PC-3 (cell line): ENCODE measurements at regions of chr4 and their contacts with region 1.

Region 1: GRCh38 chr4:43943998-43944397 is 504.6 kb downstream of the KCTD8 start:
- DNase-seq: peak; percentile 21
- ATAC-seq: peak; percentile 60
- H3K4me3 ChIP-seq: no peak overlapping the region
- H3K27ac ChIP-seq: no peak overlapping the region; the same call in 1 of the 2 replicates
- H3K4me1 ChIP-seq: peaks cover 2% of the 10 kb centered on the region; the same call in 1 of the 2 replicates
- H3K27me3 ChIP-seq: no peaks in the 10 kb centered on the region
- CTCF ChIP-seq: no peak

Region 2: DNA sequence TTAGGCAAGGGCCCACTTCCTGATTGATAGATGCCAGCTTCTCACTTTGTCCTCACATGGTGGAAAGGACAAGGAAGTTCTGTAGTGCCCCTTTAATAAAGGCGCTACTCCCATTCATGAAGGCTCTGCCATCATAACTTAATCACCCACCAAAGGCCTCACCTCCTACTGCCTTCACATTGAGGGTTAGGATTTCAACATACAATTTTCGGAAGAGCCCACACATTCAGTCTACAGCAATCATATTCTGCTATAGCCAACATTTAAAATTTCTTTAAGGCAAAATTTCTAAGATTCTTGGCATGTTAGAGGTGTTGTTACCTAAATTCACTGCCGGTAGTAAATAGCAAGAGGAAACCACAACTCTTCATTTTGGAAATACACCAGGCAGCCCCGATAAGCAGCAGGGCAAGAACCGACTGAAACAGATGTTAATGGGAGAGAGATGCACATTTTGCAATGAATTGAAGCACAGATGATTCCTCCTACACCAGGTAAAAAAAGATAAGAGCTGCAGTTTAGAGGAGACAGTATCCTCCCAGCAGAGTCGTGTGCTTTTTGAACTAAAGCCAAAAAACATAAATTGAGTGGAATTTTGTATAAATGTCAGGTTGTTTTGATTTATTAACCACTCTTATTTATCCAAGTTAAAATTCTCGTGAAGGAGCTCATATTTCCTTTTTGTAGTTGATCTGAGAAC is 90.3 kb before region 1 on chr4:
- CTCF ChIA-PET with region 1: no interaction called
- POLR2A ChIA-PET with region 1: no interaction called
- intact Hi-C with region 1: loop called (anchors 10 kb)
- DNase-seq: no peak
- ATAC-seq: no peak
- H3K4me3 ChIP-seq: no peak overlapping the region
- H3K27ac ChIP-seq: no peak overlapping the region
- H3K4me1 ChIP-seq: no peaks in the 10 kb centered on the region; the same call in 1 of the 2 replicates
- H3K27me3 ChIP-seq: no peaks in the 10 kb centered on the region
- CTCF ChIP-seq: no peak